Activated T-helper 2 cell treated with anti-CD3 and anti-CD28 coated beads, Interferon-gamma antibody, Interleukin-2, Interleukin-4, amounts not matched to agents 10 μg/mL and 5 μg/mL and 100 μg/mL, durations not matched to agents 14 hours and 24 hours and 36 hours (primary cell): ENCODE measurements at regions of chr1 and their contacts with region 1.

Region 1: GRCh38 chr1:214427871-214428277 is 123.5 kb downstream of the PTPN14 start:
- DNase-seq: peak; percentile 85
- H3K4me3 Mint-ChIP-seq: peak overlapping the region; percentile 62
- H3K27ac Mint-ChIP-seq: peak overlapping the region; percentile 97
- H3K4me1 Mint-ChIP-seq: peaks cover 60% of the 10 kb centered on the region
- H3K27me3 Mint-ChIP-seq: no peaks in the 10 kb centered on the region

Region 2: DNA sequence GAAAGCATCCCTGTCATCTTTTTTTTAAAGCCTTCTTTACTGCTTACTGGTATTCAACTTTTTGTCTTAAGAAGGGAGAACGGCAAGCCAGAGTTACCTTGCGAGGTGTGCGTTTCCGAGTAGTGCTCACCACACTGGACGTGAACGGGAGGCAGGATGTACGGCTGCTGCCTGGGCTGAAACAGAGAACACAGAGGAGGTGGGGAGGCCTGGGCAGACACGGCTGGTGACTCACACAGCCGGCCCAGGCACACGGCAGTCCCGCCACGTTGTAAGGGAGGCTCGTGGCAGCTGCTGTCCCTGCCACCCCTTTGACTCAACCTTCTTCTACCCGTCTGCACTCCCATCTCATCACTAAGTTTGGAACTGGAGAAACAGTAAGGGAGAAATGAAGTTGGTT is 41.1 kb before region 1 on chr1:
- intact Hi-C with region 1: loop called (anchors 5 kb)
- DNase-seq: peak; percentile 41
- H3K4me3 Mint-ChIP-seq: peak overlapping the region; percentile 55
- H3K27ac Mint-ChIP-seq: peak overlapping the region; percentile 92
- H3K4me1 Mint-ChIP-seq: peaks cover 58% of the 10 kb centered on the region
- H3K27me3 Mint-ChIP-seq: no peaks in the 10 kb centered on the region

Region 3: DNA sequence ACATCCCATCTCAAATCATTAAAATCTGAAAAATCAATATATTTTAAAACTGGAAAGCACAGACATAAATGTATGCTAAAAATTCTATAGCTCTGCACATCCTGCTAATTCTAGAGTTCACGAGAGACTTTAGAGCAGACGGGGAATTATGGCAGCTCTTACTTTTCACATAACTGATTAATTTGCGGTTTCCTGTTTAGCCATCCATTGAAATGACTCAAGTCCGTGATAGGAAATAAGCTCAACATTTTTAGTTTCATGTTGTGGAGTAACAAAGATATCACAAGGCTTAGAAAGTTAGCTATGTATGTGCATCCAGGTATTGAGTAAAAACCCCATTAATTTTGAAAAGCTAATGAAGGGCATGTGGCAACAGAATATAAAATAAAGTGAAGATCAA is 23.7 kb before region 1 on chr1:
- intact Hi-C with region 1: loop called (anchors 2 kb)
- DNase-seq: no peak
- H3K4me3 Mint-ChIP-seq: no peak overlapping the region
- H3K27ac Mint-ChIP-seq: peak overlapping the region; percentile 82
- H3K4me1 Mint-ChIP-seq: peaks cover 48% of the 10 kb centered on the region
- H3K27me3 Mint-ChIP-seq: no peaks in the 10 kb centered on the region

Region 4: GRCh38 chr1:214476958-214477870 is 49.3 kb after region 1 on chr1:
- intact Hi-C with region 1: no loop called
- DNase-seq: no peak
- H3K4me3 Mint-ChIP-seq: no peak overlapping the region
- H3K27ac Mint-ChIP-seq: no peak overlapping the region
- H3K4me1 Mint-ChIP-seq: peaks cover 41% of the 10 kb centered on the region
- H3K27me3 Mint-ChIP-seq: no peaks in the 10 kb centered on the region